ENCODE measurements at regions of chr1 and their contacts with region 1.

Region 1: GRCh38 chr1:117059678-117060440 is at the start of gene TTF2:
- DNase-seq: peak; percentile 90 to 94 (median 92)
- ATAC-seq: peak; percentile 99 to 100 (median 100)
- H3K4me3 ChIP-seq: peak within 1 kb of the TSS; percentile 67 to 88 (median 73)
- H3K27ac ChIP-seq: peak within 1 kb of the TSS in 11 of 12 donors; percentile 1 to 70 (median 54)
- H3K4me1 ChIP-seq: peaks cover 0 to 27% (median 7%) of the 10 kb centered on the region in 12 donors
- H3K27me3 ChIP-seq: no peaks in the 10 kb centered on the region
- CTCF ChIP-seq: peak in 9 of 12 donors; percentile 4 to 55 (median 33)
- POLR2A ChIP-seq: peak in 1 of 2 donors; percentile 13
- total RNA-seq, gene TTF2: 2.8 to 20.7 (median 9.5) TPM

Region 2: GRCh38 chr1:116586741-116587143 is 473.1 kb before region 1 on chr1:
- intact Hi-C with region 1: loop called in 1 of 10 experiments (anchors 10 kb)
- DNase-seq: no peak
- ATAC-seq: no peak
- H3K4me3 ChIP-seq: no peak overlapping the region
- H3K27ac ChIP-seq: peak overlapping the region in 1 of 12 donors; percentile 51
- H3K4me1 ChIP-seq: peaks cover 0 to 12% (median 0%) of the 10 kb centered on the region in 12 donors
- H3K27me3 ChIP-seq: no peaks in the 10 kb centered on the region
- CTCF ChIP-seq: no peak
- POLR2A ChIP-seq: no peak

Region 3: GRCh38 chr1:116737020-116737854 is 322.6 kb before region 1 on chr1:
- intact Hi-C with region 1: loop called in 8 of 10 experiments (anchors 1 to 5 kb)
- DNase-seq: peak in 4 of 5 donors; percentile 28 to 63 (median 39)
- ATAC-seq: peak in 3 of 4 donors; percentile 60 to 78 (median 70)
- H3K4me3 ChIP-seq: no peak overlapping the region
- H3K27ac ChIP-seq: peak overlapping the region in 1 of 12 donors; percentile 83
- H3K4me1 ChIP-seq: peaks cover 0 to 31% (median 0%) of the 10 kb centered on the region in 12 donors
- H3K27me3 ChIP-seq: no peaks in the 10 kb centered on the region
- CTCF ChIP-seq: peak; percentile 49 to 84 (median 71)
- POLR2A ChIP-seq: no peak

Region 4: DNA sequence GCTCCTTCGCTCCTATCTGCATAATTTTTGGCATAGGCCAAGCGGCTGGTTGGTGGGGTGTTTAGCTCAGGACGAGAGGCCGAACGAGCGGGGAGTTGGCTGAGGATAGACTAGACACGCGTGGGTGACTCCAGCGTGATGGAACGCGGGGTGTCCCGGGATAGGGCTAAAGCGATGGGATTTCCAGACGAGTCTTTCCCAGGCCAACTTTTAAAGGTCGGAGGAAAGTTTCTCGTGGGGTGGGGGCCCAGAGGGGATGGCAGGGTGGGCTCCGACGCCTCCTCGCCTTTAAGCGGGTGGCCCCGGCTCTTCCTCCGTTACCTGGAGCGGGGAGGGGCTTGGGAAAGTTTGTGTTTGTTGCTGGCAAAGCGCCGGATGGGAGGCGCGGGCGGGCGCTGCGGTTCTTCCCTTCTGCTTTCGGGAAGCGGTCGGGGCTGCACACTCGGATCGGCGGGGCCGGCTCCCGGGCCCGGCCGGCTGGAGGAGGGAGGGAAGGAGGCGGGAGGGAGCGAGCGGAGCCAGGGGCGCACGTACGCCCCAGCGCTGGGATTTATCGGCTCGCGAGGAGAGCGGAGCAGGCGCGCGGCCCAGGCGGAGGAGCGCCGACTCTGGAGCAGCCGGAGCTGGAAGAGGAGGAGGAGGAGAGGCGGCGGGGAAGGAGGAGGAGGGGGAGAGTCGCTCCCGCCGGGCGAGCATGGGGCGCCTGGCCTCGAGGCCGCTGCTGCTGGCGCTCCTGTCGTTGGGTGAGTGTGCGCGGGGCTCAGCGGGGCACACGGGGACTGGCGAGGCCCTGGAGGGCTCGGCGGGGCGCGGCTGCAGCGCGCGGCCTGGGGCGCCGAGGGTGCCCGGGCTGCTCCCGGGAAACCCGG is 150.1 kb before region 1 on chr1 and contains the start of gene PTGFRN:
- intact Hi-C with region 1: loop called in 2 of 10 experiments (anchors 10 kb)
- DNase-seq: peak; percentile 73 to 87 (median 83)
- ATAC-seq: peak; percentile 47 to 77 (median 72)
- H3K4me3 ChIP-seq: peak within 1 kb of the TSS; percentile 57 to 91 (median 78)
- H3K27ac ChIP-seq: peak within 1 kb of the TSS; percentile 51 to 96 (median 91)
- H3K4me1 ChIP-seq: peaks cover 0 to 43% (median 23%) of the 10 kb centered on the region in 12 donors
- H3K27me3 ChIP-seq: peaks cover 0 to 17% (median 0%) of the 10 kb centered on the region in 9 donors
- CTCF ChIP-seq: no peak
- POLR2A ChIP-seq: peak in 1 of 2 donors; percentile 21
- total RNA-seq, gene PTGFRN: 59.3 to 231 (median 137) TPM

Region 5: DNA sequence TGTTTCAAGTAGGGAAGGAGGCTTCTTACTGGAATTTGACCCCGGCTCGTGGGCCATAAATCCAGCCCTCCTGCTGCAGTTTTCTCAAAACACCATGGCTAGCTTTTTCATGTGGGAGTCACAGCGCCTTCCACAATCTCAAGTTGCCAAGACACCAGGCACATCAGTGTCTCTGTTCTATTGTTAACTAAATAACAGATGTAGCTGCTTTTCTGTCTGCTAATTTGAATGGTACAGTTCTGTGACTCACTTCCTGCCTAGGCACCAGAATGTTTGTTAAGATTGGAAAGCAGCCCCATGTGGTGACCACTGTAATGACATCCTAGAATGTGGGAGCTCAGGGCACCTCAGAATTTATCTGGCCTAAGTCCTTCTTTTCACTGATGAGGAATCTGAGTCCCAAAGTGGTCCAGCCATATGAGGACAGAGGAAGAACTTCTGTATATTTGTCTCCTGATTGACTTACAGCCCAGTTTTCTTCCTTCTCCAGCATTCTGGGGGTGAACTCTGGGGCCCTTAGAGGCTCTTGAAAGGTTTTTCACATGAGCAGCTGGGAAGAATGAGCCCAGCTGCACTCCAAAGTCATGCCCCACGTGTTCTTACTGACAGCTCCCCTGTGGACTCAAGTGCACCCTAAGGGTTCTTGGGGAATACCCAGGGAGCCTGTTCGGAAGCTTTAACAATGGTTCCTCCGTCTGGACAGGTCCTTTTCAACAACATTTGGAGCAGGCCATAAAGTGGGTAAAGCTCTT is 34.2 kb after region 1 on chr1:
- intact Hi-C with region 1: no loop called
- DNase-seq: no peak
- ATAC-seq: peak in 1 of 4 donors; percentile 35
- H3K4me3 ChIP-seq: no peak overlapping the region
- H3K27ac ChIP-seq: peak overlapping the region in 1 of 12 donors; percentile 46
- H3K4me1 ChIP-seq: peaks cover 0 to 23% (median 9%) of the 10 kb centered on the region in 12 donors
- H3K27me3 ChIP-seq: no peaks in the 10 kb centered on the region
- CTCF ChIP-seq: peak in 4 of 12 donors; percentile 7 to 30 (median 19)
- POLR2A ChIP-seq: no peak

Region 6: GRCh38 chr1:117605774-117606648 is 546.2 kb after region 1 on chr1 and contains the start of gene TENT5C:
- intact Hi-C with region 1: loop called in 1 of 10 experiments (anchors 10 kb)
- DNase-seq: peak; percentile 97 to 99 (median 98)
- ATAC-seq: peak; percentile 97 to 98 (median 98)
- H3K4me3 ChIP-seq: peak within 1 kb of the TSS; percentile 60 to 90 (median 78)
- H3K27ac ChIP-seq: peak within 1 kb of the TSS in 11 of 12 donors; percentile 75 to 86 (median 79)
- H3K4me1 ChIP-seq: peaks cover 0 to 47% (median 28%) of the 10 kb centered on the region in 12 donors
- H3K27me3 ChIP-seq: no peaks in the 10 kb centered on the region
- CTCF ChIP-seq: peak in 4 of 12 donors; percentile 3 to 15 (median 6)
- POLR2A ChIP-seq: peak; percentile 51 to 97
- total RNA-seq, gene TENT5C: 7.9 to 21.6 (median 15.1) TPM

Measured in heart left ventricle (tissue), 16 donors.